ENCODE measurements at regions of chr4 and their contacts with region 1.

Region 1: DNA sequence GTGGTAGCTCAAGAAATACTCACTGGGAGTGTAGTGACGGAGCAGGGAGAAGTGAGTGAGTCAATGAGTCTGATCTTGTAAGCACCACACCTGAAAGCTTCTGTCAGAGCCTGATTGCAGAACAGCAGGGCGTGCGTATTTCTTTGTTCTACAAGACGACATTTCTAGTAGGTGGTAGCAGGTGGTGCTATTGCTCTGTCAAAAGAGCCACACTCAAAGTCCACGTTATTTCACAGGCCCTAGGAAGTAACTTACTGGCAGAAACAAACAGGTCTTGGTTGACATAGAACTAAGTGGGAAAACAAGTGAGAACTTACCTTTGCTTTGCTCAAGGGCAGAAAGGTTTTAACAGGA is 46.4 kb upstream of the SPRY1 start:
- DNase-seq: no peak
- ATAC-seq: peak in 1 of 2 donors; percentile 55
- H3K4me3 ChIP-seq: no peak overlapping the region
- H3K27ac ChIP-seq: no peak overlapping the region
- H3K4me1 ChIP-seq: peaks cover 17 to 26% of the 10 kb centered on the region in 2 donors
- H3K27me3 ChIP-seq: no peaks in the 10 kb centered on the region
- CTCF ChIP-seq: no peak
- POLR2A ChIP-seq: no peak

Region 2: GRCh38 chr4:123390846-123391456 is 40.8 kb after region 1 on chr4:
- in situ Hi-C with region 1: no loop called
- intact Hi-C with region 1: loop called (anchors 5 kb)
- DNase-seq: no peak
- ATAC-seq: no peak
- H3K4me3 ChIP-seq: no peak overlapping the region
- H3K27ac ChIP-seq: no peak overlapping the region
- H3K4me1 ChIP-seq: peaks cover 0 to 20% of the 10 kb centered on the region in 2 donors
- H3K27me3 ChIP-seq: no peaks in the 10 kb centered on the region
- CTCF ChIP-seq: peak in 3 of 5 experiments; percentile 41 to 49 (median 47)
- POLR2A ChIP-seq: no peak

Measured in gastrocnemius medialis (tissue), 4 donors.